ENCODE measurements at regions of chr17 and their contacts with region 1.

Region 1: GRCh38 chr17:17972126-17972951 is at the starts of genes DRC3 and TOM1L2:
- DNase-seq: peak; percentile 100
- ATAC-seq: peak; percentile 90
- H3K4me3 ChIP-seq: peak within 1 kb of the TSS; percentile 62 to 66
- H3K4me3 Mint-ChIP-seq: peak within 1 kb of the TSS; percentile 97
- H3K27ac ChIP-seq: peak within 1 kb of the TSS; percentile 77 to 85
- H3K27ac Mint-ChIP-seq: peak within 1 kb of the TSS; percentile 97
- H3K4me1 ChIP-seq: peaks cover 13% of the 10 kb centered on the region
- H3K4me1 Mint-ChIP-seq: peaks cover 39% of the 10 kb centered on the region
- H3K27me3 ChIP-seq: no peaks in the 10 kb centered on the region
- H3K27me3 Mint-ChIP-seq: no peaks in the 10 kb centered on the region
- CTCF ChIP-seq: no peak
- total RNA-seq, gene DRC3: 0.61 to 0.90 TPM
- total RNA-seq, gene TOM1L2: 15.4 to 20.9 TPM

Region 2: DNA sequence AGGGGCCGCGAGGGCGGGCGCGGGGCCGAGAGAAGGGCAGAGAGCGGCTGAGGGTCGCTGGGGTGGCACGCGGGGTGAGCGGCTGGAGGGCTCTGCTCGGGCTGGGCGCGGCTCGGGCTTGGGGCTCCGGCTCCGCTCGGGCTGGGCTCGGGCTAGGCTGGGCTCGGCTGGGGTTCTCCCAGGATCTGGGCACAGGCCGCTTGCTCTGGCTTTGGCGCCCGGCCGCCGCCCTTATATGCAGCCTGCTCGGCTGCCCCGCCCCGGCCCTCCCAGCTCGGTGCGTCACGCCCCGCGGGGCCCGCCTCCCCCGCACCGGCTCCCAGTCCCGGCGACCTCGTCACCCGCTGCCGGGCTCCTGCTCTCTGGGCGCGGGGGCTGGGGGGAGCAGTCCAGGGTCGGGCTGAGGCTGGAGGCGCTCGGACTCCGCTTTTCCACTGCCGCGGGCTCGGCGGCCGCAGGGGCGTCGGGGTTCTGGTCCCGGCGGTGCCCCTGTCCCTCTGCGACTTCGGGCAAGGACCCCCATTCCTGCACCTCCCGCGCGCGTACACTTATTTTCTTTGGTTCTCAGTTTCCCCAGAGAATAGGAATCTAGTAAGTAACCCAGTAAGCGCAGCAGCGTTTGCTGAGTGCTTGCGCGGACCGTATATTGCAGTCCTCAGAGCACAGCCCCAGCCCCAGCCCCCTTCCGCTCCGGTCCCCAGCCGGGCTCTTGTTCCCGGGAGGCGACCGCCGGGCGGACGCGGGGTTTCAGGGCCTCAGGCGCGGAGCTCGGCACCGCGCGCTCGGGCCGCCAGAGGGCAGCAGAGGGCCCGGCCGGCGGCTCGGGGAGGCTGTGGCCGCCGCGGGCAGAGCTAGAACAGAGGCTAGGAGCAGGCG is 475.9 kb before region 1 on chr17 and contains the start of gene RASD1:
- CTCF ChIA-PET with region 1: no interaction called
- POLR2A ChIA-PET with region 1: no interaction called
- intact Hi-C with region 1: loop called in 1 of 2 experiments (anchors 2 kb)
- DNase-seq: peak; percentile 62 to 88 (median 75)
- ATAC-seq: peak; percentile 85
- H3K4me3 ChIP-seq: peak within 1 kb of the TSS; percentile 51 to 76
- H3K4me3 Mint-ChIP-seq: peak within 1 kb of the TSS; percentile 84
- H3K27ac ChIP-seq: no peak within 1 kb of the TSS
- H3K27ac Mint-ChIP-seq: no peak within 1 kb of the TSS
- H3K4me1 ChIP-seq: peaks cover 13% of the 10 kb centered on the region
- H3K4me1 Mint-ChIP-seq: peaks cover 16% of the 10 kb centered on the region
- H3K27me3 ChIP-seq: peaks cover 0 to 8% of the 10 kb centered on the region in 2 experiments
- H3K27me3 Mint-ChIP-seq: peaks cover 10% of the 10 kb centered on the region
- CTCF ChIP-seq: peak; percentile 95
- total RNA-seq, gene RASD1: 2.8 to 2.9 TPM

Region 3: DNA sequence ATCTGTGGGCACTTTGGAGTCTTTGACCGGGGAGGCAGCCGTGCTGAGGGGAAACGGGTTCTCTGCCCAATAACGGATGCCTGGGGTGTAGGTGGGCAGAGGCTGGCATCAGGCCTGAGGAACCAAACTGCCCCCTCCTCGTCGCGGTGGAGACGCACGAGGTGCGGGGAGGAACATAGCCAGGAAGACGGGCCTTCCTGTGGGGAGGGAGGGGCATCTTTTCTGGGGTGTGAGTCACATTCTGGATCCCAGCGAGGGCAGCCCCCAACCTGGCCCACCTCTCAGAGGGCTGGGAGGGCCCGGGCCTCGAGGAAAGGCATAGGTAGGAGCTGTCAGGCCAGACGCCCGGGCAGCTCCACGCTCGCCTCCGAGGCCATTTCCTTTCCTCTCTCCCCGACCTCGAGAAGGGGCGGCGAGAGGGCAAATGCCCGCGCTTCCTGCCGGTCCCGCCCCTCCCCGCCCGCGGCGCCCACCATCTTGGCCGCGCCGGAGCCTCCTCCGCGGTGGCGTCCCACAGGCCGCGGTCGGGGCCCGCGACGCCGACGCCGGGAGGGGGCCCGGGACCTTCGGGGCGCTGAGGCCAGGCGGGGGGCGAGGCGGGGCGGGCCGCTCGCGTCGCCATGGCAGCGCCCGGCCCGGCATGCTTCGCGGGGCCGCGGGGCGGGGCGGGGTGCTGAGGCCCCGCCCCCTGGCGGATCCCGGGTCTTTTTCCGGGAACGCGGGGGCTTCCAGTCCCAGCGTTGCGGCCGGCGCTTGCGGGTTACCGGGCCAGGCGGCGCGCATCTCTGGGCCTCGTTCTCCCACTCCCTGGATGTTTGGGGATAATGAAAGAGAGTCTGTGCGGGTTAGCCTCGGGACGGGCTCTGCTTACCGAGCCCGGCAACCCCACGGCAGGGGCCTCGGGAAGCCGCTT is 277.9 kb before region 1 on chr17:
- CTCF ChIA-PET with region 1: no interaction called
- POLR2A ChIA-PET with region 1: no interaction called
- intact Hi-C with region 1: loop called (anchors 1 kb)
- DNase-seq: peak; percentile 25 to 87 (median 76)
- ATAC-seq: peak; percentile 72
- H3K4me3 ChIP-seq: peak overlapping the region; percentile 83 to 91
- H3K4me3 Mint-ChIP-seq: peak overlapping the region; percentile 86
- H3K27ac ChIP-seq: peak overlapping the region; percentile 88 to 97
- H3K27ac Mint-ChIP-seq: peak overlapping the region; percentile 99
- H3K4me1 ChIP-seq: peaks cover 52% of the 10 kb centered on the region
- H3K4me1 Mint-ChIP-seq: peaks cover 68% of the 10 kb centered on the region
- H3K27me3 ChIP-seq: no peaks in the 10 kb centered on the region
- H3K27me3 Mint-ChIP-seq: no peaks in the 10 kb centered on the region
- CTCF ChIP-seq: no peak

Region 4: DNA sequence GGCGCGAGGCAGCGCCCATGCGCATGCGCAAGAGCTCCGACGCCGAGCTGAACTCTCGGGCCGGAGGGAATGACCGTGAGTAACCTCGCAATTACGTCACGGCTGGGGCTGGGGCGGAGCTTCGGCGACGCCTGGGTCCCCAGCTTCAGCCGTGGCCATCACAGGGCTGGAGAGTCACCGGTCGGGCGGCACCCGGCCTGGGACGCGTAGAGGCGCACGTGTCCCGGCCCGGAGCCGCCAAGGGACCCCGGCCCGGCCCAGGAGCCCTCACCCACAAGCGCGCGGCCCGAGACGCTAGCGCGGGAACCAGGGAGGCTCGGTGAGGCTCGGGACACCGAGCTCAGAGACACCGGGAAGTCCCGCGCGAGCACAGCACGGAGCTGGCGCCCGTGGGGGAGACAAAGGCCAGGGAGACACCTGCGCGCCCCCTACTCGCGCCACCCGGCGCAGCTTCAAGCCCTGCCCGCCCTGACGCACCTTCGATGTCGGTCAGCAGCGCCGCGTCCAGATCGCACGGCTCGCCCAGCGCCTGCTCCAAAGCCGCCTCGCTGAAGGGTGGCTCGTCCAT is 136.0 kb before region 1 on chr17:
- CTCF ChIA-PET with region 1: no interaction called
- POLR2A ChIA-PET with region 1: interaction called, 4 read pairs
- intact Hi-C with region 1: loop called in 1 of 2 experiments (anchors 1 kb)
- DNase-seq: peak; percentile 94 to 99 (median 97)
- ATAC-seq: peak; percentile 72
- H3K4me3 ChIP-seq: peak overlapping the region; percentile 87 to 95
- H3K4me3 Mint-ChIP-seq: peak overlapping the region; percentile 88
- H3K27ac ChIP-seq: peak overlapping the region; percentile 99
- H3K27ac Mint-ChIP-seq: peak overlapping the region; percentile 97
- H3K4me1 ChIP-seq: peaks cover 82% of the 10 kb centered on the region
- H3K4me1 Mint-ChIP-seq: peaks cover 75% of the 10 kb centered on the region
- H3K27me3 ChIP-seq: no peaks in the 10 kb centered on the region
- H3K27me3 Mint-ChIP-seq: no peaks in the 10 kb centered on the region
- CTCF ChIP-seq: no peak

Region 5: DNA sequence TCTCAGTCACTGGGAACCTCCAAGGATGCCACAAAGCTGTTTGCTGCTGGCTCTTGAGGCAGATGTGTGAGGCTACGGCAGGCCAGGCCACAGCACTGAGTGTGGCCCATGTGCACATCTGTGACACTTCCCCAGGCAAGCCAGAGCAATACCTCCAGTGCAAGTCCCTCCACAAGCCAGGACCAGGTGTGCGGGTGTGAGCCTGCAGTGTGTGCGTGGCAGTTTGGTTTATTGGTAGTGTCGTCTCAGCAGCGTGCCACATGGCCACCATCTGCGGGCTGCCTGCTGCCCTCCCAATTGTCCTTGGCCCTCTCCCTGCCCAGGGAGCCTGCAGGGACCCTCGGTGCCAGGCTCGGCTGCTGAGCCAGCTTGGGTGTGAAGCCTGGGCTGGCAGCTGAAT is 125.7 kb before region 1 on chr17:
- CTCF ChIA-PET with region 1: no interaction called
- POLR2A ChIA-PET with region 1: no interaction called
- intact Hi-C with region 1: no loop called
- DNase-seq: no peak
- ATAC-seq: no peak
- H3K4me3 ChIP-seq: no peak overlapping the region
- H3K4me3 Mint-ChIP-seq: no peak overlapping the region
- H3K27ac ChIP-seq: no peak overlapping the region
- H3K27ac Mint-ChIP-seq: no peak overlapping the region
- H3K4me1 ChIP-seq: peaks cover 53% of the 10 kb centered on the region
- H3K4me1 Mint-ChIP-seq: peaks cover 51% of the 10 kb centered on the region
- H3K27me3 ChIP-seq: no peaks in the 10 kb centered on the region
- H3K27me3 Mint-ChIP-seq: no peaks in the 10 kb centered on the region
- CTCF ChIP-seq: no peak

Region 6: GRCh38 chr17:17959520-17960361 is 12.6 kb before region 1 on chr17:
- CTCF ChIA-PET with region 1: interaction called, 5 read pairs
- POLR2A ChIA-PET with region 1: interaction called, 31 read pairs
- intact Hi-C with region 1: loop called in 1 of 2 experiments (anchors 1 kb)
- DNase-seq: peak in 2 of 9 experiments; percentile 23 to 49
- ATAC-seq: peak; percentile 6
- H3K4me3 ChIP-seq: peak overlapping the region; percentile 5 to 23
- H3K4me3 Mint-ChIP-seq: peak overlapping the region; percentile 81
- H3K27ac ChIP-seq: peak overlapping the region; percentile 24 to 84
- H3K27ac Mint-ChIP-seq: peak overlapping the region; percentile 98
- H3K4me1 ChIP-seq: peaks cover 65% of the 10 kb centered on the region
- H3K4me1 Mint-ChIP-seq: peaks cover 71% of the 10 kb centered on the region
- H3K27me3 ChIP-seq: no peaks in the 10 kb centered on the region
- H3K27me3 Mint-ChIP-seq: no peaks in the 10 kb centered on the region
- CTCF ChIP-seq: no peak

Region 7: GRCh38 chr17:18183334-18184142 is 211.2 kb after region 1 on chr17 and contains the start of gene ALKBH5:
- CTCF ChIA-PET with region 1: no interaction called
- POLR2A ChIA-PET with region 1: interaction called, 5 read pairs
- intact Hi-C with region 1: loop called (anchors 1 to 2 kb)
- DNase-seq: peak; percentile 93 to 99 (median 98)
- ATAC-seq: peak; percentile 77
- H3K4me3 ChIP-seq: peak within 1 kb of the TSS; percentile 58 to 81
- H3K4me3 Mint-ChIP-seq: peak within 1 kb of the TSS; percentile 95
- H3K27ac ChIP-seq: peak within 1 kb of the TSS; percentile 92 to 95
- H3K27ac Mint-ChIP-seq: peak within 1 kb of the TSS; percentile 97
- H3K4me1 ChIP-seq: peaks cover 42% of the 10 kb centered on the region
- H3K4me1 Mint-ChIP-seq: peaks cover 47% of the 10 kb centered on the region
- H3K27me3 ChIP-seq: no peaks in the 10 kb centered on the region
- H3K27me3 Mint-ChIP-seq: no peaks in the 10 kb centered on the region
- CTCF ChIP-seq: peak; percentile 73
- total RNA-seq, gene ALKBH5: 138 to 141 TPM